ENCODE measurements at regions of chr6 and their contacts with region 1.

Region 1: DNA sequence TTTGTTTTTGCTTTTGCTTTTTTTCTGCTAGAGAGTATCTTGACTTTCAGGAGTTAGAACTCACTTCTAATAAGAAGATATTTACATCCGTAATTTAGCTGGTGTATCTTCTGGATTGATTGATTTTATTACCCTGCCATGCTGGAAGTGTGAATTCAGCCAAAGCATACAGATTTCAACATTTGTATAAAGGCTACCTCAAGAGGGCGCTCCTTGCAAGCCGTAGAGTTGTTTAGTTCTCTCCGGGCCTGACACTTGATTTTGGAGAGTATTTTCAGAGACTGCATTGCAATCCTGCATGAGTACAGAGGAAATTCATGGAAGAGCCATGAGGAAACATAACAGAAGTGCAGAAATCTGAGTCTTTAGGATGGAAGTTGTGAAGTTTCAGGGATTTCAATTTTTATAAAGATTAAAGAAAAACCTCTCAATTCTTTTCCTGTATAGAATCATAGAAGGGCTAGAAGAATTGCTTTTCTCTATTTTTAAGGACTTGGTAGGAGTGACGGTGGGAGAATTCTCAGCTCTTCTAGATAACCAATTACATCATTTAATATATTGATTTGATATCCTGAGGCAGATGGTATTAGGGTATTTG is 66.7 kb upstream of the TIAM2 start:
- DNase-seq: peak; percentile 69
- ATAC-seq: peak; percentile 77
- H3K4me3 ChIP-seq: no peak overlapping the region
- H3K27ac ChIP-seq: no peak overlapping the region
- H3K4me1 ChIP-seq: peaks cover 16% of the 10 kb centered on the region
- H3K27me3 ChIP-seq: no peaks in the 10 kb centered on the region
- CTCF ChIP-seq: peak; percentile 88
- POLR2A ChIP-seq: 0 out of 2 replicates have a peak, but pooled peaks have one; percentile 34
- RAD21 ChIP-seq: peak; percentile 97

Region 2: GRCh38 chr6:154675602-154676088 is 252.8 kb before region 1 on chr6:
- CTCF ChIA-PET with region 1: interaction called, 3 read pairs
- POLR2A ChIA-PET with region 1: no interaction called
- dilution Hi-C with region 1: no loop called
- in situ Hi-C with region 1: no loop called
- intact Hi-C with region 1: loop called (anchors 2 kb)
- DNase-seq: peak; percentile 96
- ATAC-seq: peak; percentile 98
- H3K4me3 ChIP-seq: no peak overlapping the region
- H3K27ac ChIP-seq: no peak overlapping the region
- H3K4me1 ChIP-seq: no peaks in the 10 kb centered on the region
- H3K27me3 ChIP-seq: peaks cover 2% of the 10 kb centered on the region; the same call in 1 of the 2 replicates
- CTCF ChIP-seq: peak; percentile 100; the same call in 1 of the 2 replicates
- POLR2A ChIP-seq: peak; percentile 56; the same call in 1 of the 2 replicates
- RAD21 ChIP-seq: peak; percentile 99

Region 3: DNA sequence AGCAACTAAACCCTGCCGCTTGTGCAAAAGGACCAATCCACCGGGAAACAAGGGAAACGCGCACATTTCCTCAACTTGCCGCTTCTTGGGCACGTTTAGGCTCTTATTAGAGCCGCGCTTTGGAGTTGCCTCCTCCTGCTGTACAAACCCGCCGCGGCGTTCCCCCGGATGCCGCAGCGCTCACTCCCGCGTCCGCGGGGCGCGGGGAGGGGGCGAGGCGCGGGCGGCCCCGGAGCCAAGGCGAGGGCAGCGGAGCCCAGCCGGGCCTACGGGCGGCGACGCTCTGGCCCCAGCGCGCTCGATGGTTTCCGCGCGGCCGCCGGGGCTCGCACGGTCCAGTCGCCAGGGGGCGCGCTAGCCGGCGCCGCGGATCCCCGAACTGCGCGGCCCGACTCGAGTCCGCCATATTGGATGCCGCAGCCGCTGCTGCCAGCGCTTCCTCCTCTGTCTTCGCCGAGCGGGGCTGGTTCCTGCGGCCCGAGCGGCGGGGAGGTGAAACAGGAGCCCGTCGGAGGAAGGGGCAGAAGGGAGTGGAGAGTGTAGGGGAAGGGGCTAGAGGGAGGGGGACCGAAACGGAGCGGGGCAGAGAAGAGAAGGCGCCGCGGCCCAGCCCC is 195.3 kb before region 1 on chr6 and contains the start of gene SCAF8:
- CTCF ChIA-PET with region 1: no interaction called
- POLR2A ChIA-PET with region 1: no interaction called
- dilution Hi-C with region 1: no loop called
- in situ Hi-C with region 1: no loop called
- intact Hi-C with region 1: no loop called
- DNase-seq: peak; percentile 69
- ATAC-seq: peak; percentile 80
- H3K4me3 ChIP-seq: peak within 1 kb of the TSS; percentile 87
- H3K27ac ChIP-seq: peak within 1 kb of the TSS; percentile 100
- H3K4me1 ChIP-seq: peaks cover 2% of the 10 kb centered on the region
- H3K27me3 ChIP-seq: no peaks in the 10 kb centered on the region
- CTCF ChIP-seq: peak; percentile 92
- POLR2A ChIP-seq: peak; percentile 76
- RAD21 ChIP-seq: peak; percentile 53
- total RNA-seq, gene SCAF8: 21.9 and 23.5 TPM in 2 replicates

Region 4: GRCh38 chr6:154830771-154831170 is 97.7 kb before region 1 on chr6:
- CTCF ChIA-PET with region 1: no interaction called
- POLR2A ChIA-PET with region 1: no interaction called
- dilution Hi-C with region 1: no loop called
- in situ Hi-C with region 1: no loop called
- intact Hi-C with region 1: no loop called
- DNase-seq: no peak
- ATAC-seq: no peak
- H3K4me3 ChIP-seq: no peak overlapping the region
- H3K27ac ChIP-seq: no peak overlapping the region
- H3K4me1 ChIP-seq: no peaks in the 10 kb centered on the region
- H3K27me3 ChIP-seq: no peaks in the 10 kb centered on the region
- CTCF ChIP-seq: no peak
- POLR2A ChIP-seq: no peak
- RAD21 ChIP-seq: no peak

Region 5: DNA sequence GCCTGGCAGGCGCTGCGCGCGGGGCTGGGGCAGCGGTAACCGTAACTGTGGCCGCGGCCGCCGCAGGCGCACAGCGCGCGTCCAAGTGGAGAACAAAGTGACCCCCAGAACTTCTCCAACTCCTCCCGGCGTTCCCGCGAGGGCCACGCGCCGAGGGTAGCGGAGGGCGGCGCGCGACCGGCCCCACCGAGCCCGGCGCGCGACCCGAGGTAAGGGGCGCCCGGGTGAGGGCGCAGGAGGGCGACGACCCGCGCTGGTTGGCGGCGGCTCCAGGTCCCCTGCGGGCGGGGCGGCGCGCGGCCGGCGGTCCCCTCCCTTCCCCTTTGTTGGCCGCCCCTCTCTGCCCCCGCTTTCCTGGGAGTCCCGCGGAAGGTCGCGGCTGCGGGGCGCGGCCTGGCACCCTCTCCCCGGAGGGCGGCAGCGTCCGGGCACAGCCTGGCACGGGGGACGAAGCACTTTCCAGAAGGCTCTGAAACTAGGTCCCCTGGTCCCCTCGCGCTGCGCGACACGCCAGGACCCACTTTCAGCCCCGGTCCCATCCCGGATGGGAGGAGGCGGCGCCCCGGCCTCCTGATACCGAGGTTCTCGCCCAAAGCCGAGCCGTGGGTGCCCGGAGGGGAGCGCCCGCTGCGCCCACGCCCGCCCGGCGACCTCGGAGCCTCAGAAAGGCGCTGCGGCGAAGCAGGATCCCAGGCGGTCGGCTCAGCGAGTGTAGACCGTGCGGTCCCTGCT is 67.0 kb after region 1 on chr6 and contains the start of gene TIAM2:
- CTCF ChIA-PET with region 1: no interaction called
- POLR2A ChIA-PET with region 1: interaction called, 4 read pairs
- dilution Hi-C with region 1: no loop called
- in situ Hi-C with region 1: no loop called
- intact Hi-C with region 1: loop called (anchors 5 kb)
- DNase-seq: no peak
- ATAC-seq: peak; percentile 87
- H3K4me3 ChIP-seq: peak within 1 kb of the TSS; percentile 91
- H3K27ac ChIP-seq: peak within 1 kb of the TSS; percentile 35; the same call in 1 of the 2 replicates
- H3K4me1 ChIP-seq: no peaks in the 10 kb centered on the region; the same call in 1 of the 2 replicates
- H3K27me3 ChIP-seq: no peaks in the 10 kb centered on the region
- CTCF ChIP-seq: 0 out of 2 replicates have a peak, but pooled peaks have one; percentile 4
- POLR2A ChIP-seq: no peak
- RAD21 ChIP-seq: no peak
- total RNA-seq, gene TIAM2: 4.7 and 5.6 TPM in 2 replicates

Region 6: DNA sequence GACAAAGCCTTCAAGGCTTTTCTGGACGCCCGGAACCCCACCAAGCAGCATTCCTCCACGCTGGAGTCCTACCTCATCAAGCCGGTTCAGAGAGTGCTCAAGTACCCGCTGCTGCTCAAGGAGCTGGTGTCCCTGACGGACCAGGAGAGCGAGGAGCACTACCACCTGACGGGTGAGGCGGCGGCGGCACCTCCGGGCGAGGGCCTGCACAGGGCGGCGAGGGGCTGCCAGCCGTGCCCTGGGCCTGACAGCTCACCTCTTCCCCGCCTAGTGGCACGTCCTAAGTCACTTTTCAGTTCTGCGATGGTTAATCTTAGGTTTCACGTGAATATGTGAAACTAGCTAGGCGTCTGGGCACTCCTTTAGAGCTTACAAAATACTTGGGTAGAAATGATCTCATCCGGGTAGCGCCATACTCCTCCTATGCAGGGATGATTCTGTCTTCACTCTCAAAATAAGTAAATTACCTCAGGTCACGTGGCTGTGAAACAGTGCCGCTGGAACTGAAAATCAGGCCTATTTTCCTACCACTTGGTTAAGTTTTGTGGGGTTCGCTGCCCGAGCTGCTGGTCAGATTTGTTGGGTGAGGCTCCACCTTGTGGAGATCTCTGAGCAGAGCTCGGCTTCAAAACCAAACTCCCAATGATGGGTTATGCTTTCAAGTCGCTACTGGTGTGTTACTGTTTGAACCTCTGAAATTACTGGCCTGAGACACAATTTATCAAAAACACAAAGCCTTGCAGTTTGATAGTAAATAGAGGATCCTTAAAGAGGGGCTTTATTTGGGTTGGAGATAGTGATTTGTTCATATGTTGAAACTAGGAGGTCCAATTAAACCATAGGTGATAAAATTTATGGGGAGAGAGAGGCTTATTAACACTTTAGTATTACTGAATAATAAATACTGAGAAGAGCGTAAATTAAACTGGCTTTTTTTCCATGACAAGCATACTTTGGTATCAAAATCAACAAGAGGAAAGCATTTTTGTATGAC is 319.9 kb after region 1 on chr6:
- CTCF ChIA-PET with region 1: interaction called, 3 read pairs
- POLR2A ChIA-PET with region 1: no interaction called
- dilution Hi-C with region 1: no loop called
- in situ Hi-C with region 1: loop called (anchors 5 kb)
- intact Hi-C with region 1: loop called (anchors 1 kb)
- DNase-seq: peak; percentile 77
- ATAC-seq: peak; percentile 86
- H3K4me3 ChIP-seq: no peak overlapping the region
- H3K27ac ChIP-seq: no peak overlapping the region
- H3K4me1 ChIP-seq: peaks cover 4% of the 10 kb centered on the region; the same call in 1 of the 2 replicates
- H3K27me3 ChIP-seq: no peaks in the 10 kb centered on the region
- CTCF ChIP-seq: peak; percentile 79
- POLR2A ChIP-seq: no peak
- RAD21 ChIP-seq: peak; percentile 87

Region 7: GRCh38 chr6:155314092-155314772 is 385.8 kb after region 1 on chr6 and contains the start of gene TFB1M:
- CTCF ChIA-PET with region 1: no interaction called
- POLR2A ChIA-PET with region 1: no interaction called
- dilution Hi-C with region 1: no loop called
- in situ Hi-C with region 1: no loop called
- intact Hi-C with region 1: loop called (anchors 5 kb)
- DNase-seq: peak; percentile 98
- ATAC-seq: peak; percentile 97
- H3K4me3 ChIP-seq: peak within 1 kb of the TSS; percentile 84
- H3K27ac ChIP-seq: peak within 1 kb of the TSS; percentile 78
- H3K4me1 ChIP-seq: peaks cover 6% of the 10 kb centered on the region
- H3K27me3 ChIP-seq: no peaks in the 10 kb centered on the region
- CTCF ChIP-seq: no peak
- POLR2A ChIP-seq: peak; percentile 83
- RAD21 ChIP-seq: no peak
- total RNA-seq, gene TFB1M: 22.4 and 28.1 TPM in 2 replicates